ENCODE measurements at regions of chr11 and their contacts with region 1.

Region 1: GRCh38 chr11:94151903-94152677 is 23.4 kb downstream of the PANX1 start:
- DNase-seq: no peak

Region 2: DNA sequence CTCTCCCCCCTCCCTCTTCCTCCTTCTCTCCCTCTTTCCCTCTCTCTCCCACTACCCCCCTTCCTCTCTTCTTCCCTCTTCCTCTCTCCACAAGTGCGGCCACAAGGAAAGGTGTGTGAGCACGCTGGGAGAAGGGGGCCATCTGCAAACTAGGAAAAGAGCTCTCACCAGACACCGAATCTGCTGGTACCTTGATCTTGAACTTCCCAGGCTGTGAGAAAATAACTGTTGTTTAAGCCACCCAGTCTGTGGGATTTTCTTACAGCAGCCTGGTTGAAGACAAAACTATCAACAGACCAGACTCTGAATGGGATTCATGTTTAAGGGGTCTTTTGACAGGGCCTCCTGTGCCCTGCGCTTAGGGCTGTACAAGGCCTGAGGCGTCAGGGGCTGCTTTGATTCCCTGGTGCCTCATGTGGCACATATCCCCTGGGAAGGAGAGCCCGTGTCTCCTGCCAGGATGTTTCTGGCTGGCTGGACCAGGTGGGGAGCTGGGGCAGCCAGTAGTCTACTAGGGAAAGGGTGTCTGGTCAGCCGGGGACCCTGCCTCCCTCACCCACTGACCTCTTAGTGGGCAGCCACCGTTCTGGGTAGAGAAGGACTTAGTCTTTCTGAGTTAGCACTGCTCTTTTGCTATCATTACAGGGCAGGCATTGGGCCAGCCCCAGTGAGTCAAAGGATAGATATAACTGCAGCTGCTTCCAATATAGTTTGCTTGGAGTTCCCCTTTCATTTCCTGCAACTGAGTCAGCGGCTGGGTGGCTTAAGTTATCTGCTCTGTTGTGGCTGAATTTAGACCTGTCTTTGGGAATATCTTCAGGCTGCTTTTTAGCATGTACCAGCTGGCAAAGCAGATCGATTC is 17.2 kb before region 1 on chr11:
- intact Hi-C with region 1: loop called (anchors 2 kb)
- DNase-seq: peak; percentile 85